PC-9 (cell line): ENCODE measurements at regions of chr5 and their contacts with region 1.

Region 1: GRCh38 chr5:37370864-37371726 is at the start of gene NUP155:
- DNase-seq: peak; percentile 91 to 96
- H3K4me3 ChIP-seq: peak within 1 kb of the TSS; percentile 95
- H3K27ac ChIP-seq: peak within 1 kb of the TSS; percentile 43
- H3K4me1 ChIP-seq: peaks cover 15% of the 10 kb centered on the region
- H3K27me3 ChIP-seq: no peaks in the 10 kb centered on the region
- CTCF ChIP-seq: no peak
- total RNA-seq, gene NUP155: 62.7 and 92.3 TPM in 2 replicates

Region 2: GRCh38 chr5:37254618-37255017 is 116.5 kb before region 1 on chr5:
- CTCF ChIA-PET with region 1: interaction called, 9 read pairs
- POLR2A ChIA-PET with region 1: interaction called, 24 read pairs
- intact Hi-C with region 1: no loop called
- DNase-seq: no peak
- H3K4me3 ChIP-seq: no peak overlapping the region
- H3K27ac ChIP-seq: no peak overlapping the region
- H3K4me1 ChIP-seq: no peaks in the 10 kb centered on the region
- H3K27me3 ChIP-seq: no peaks in the 10 kb centered on the region
- CTCF ChIP-seq: no peak

Region 3: GRCh38 chr5:37272564-37272963 is 98.5 kb before region 1 on chr5:
- CTCF ChIA-PET with region 1: no interaction called
- POLR2A ChIA-PET with region 1: interaction called, 13 read pairs
- intact Hi-C with region 1: no loop called
- DNase-seq: peak; percentile 89 to 94
- H3K4me3 ChIP-seq: no peak overlapping the region
- H3K27ac ChIP-seq: peak overlapping the region; percentile 83
- H3K4me1 ChIP-seq: peaks cover 29% of the 10 kb centered on the region
- H3K27me3 ChIP-seq: no peaks in the 10 kb centered on the region
- CTCF ChIP-seq: no peak